Mammary epithelial cell (primary cell): ENCODE measurements at regions of chr17 and their contacts with region 1.

Region 1: DNA sequence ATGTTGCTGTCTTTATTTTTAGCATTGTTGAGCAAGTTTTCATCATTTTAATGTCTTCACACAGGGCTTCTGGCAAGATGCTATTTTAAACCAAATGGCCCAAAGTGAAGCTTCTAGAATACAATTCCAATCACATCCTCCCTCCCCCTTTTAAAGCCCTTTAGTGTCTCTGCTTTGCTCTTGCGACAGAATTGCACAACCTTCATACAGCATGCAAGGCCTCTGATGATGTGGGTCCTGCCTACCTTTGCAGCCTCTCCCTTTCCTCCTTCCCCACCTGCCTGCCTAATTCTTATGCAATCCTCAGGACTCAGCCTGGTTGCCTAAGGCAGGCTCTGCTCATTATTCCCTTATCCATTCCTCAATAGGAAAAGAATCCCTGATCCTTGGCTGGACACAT is 381.7 kb downstream of the SLC39A11 start:
- DNase-seq: peak; percentile 84
- H3K4me3 ChIP-seq: no peak overlapping the region
- H3K27ac ChIP-seq: peak overlapping the region; percentile 68
- H3K4me1 ChIP-seq: peaks cover 32% of the 10 kb centered on the region
- H3K27me3 ChIP-seq: no peaks in the 10 kb centered on the region
- CTCF ChIP-seq: no peak

Region 2: DNA sequence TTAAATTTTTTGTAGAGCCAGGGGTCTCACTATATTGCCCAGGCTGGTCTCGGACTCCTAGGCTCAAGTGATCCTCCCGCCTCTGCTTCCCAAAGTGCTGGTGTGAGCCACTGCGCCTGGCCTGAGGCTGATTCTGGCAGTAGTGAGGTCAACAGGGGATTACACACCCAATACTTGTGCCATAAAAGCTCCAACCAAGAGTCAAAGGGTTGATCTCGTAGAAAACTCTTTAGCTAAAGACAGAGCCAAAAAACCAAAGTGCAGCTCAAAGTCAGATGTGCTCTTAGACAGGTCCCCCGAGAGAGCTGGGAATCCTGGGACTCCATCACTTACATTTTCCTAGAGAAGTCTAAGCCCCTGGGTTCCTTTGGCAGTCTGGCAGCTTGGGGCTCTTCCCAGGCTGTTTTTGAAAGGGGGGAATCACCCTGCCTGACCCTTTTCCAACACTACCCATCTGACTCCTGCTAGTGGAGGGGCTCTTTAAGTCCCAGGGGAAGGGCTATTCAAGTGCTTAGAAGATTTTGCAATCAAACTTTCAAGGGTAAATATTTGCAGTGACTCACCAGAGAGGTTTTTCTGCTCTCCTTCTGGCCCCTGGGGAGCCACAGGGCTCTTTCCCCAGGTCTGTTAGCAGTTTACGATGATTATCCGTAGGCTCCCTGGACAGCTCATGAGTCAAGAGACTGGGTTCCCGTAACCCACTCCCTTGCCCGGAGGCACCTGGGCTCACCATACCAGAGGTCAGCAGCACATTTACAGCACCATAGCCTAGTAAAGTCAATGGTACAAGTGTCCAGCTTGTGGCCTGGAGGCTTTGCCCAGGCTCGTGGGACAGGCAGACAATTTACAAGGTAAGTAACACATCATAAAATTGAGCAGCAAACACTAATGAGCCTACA is 27.1 kb before region 1 on chr17:
- CTCF ChIA-PET with region 1: interaction called, 3 read pairs
- dilution Hi-C with region 1: no loop called
- in situ Hi-C with region 1: no loop called
- intact Hi-C with region 1: loop called (anchors 2 kb)
- DNase-seq: peak; percentile 95
- H3K4me3 ChIP-seq: no peak overlapping the region
- H3K27ac ChIP-seq: peak overlapping the region; percentile 58
- H3K4me1 ChIP-seq: peaks cover 50% of the 10 kb centered on the region
- H3K27me3 ChIP-seq: no peaks in the 10 kb centered on the region
- CTCF ChIP-seq: no peak

Region 3: GRCh38 chr17:72916991-72917390 is 206.2 kb after region 1 on chr17:
- CTCF ChIA-PET with region 1: no interaction called
- dilution Hi-C with region 1: no loop called
- in situ Hi-C with region 1: no loop called
- intact Hi-C with region 1: no loop called
- DNase-seq: no peak
- H3K4me3 ChIP-seq: no peak overlapping the region
- H3K27ac ChIP-seq: no peak overlapping the region
- H3K4me1 ChIP-seq: no peaks in the 10 kb centered on the region
- H3K27me3 ChIP-seq: no peaks in the 10 kb centered on the region
- CTCF ChIP-seq: no peak